Activated CD4-positive, alpha-beta memory T cell treated with anti-CD3 and anti-CD28 coated beads for 36 hours (primary cell): ENCODE measurements at regions of chr16 and their contacts with region 1.

Region 1: GRCh38 chr16:58000706-58001676 is at the start of gene USB1:
- DNase-seq: peak; percentile 87
- H3K4me3 Mint-ChIP-seq: peak within 1 kb of the TSS; percentile 91
- H3K27ac Mint-ChIP-seq: peak within 1 kb of the TSS; percentile 81
- H3K4me1 Mint-ChIP-seq: peaks cover 52% of the 10 kb centered on the region
- H3K27me3 Mint-ChIP-seq: no peaks in the 10 kb centered on the region
- total RNA-seq, gene USB1: 42.2 to 46.0 TPM

Region 2: DNA sequence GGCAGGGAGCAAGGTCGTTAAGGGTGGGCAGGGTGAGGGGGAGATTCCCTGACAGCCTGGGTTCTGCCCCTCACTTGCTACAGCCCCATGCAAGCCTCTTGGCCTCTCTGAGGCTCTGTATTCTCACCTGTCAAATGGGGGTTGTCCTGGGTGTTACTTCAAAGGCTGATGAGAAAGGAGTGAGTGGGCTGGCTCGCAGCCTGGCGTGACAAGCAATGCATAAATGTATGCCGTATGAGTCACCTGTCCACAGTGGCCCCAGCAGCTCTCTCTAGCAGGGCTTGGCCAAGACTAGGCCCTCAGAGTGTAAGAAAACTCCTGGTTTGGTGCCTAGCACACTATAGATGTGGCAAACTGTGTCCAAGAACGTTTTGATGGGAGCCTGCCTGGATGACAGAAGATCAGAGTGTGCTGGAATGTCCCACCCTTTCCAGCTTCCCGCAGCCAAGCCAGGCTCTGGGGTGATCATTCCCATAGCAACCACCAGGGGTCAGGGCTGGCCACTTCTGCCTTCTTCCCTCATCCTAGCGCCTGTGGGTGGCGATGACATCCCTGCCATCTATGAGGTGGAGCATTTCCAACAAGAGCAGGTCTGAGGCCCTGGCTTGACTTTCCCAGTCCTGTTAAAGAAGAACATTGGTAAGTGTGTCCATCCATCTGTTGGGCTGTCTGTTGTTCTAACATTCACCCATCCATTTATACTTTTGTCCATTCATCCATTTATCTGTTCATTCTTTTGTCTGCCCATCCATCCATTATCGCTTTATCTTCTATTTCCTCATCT is 409.7 kb before region 1 on chr16:
- CTCF ChIA-PET with region 1: no interaction called
- POLR2A ChIA-PET with region 1: no interaction called
- intact Hi-C with region 1: loop called (anchors 2 kb)
- DNase-seq: peak; percentile 87
- H3K4me3 Mint-ChIP-seq: peak overlapping the region; percentile 53
- H3K27ac Mint-ChIP-seq: peak overlapping the region; percentile 93
- H3K4me1 Mint-ChIP-seq: peaks cover 34% of the 10 kb centered on the region
- H3K27me3 Mint-ChIP-seq: no peaks in the 10 kb centered on the region

Region 3: GRCh38 chr16:57757326-57757786 is 243.6 kb before region 1 on chr16:
- CTCF ChIA-PET with region 1: interaction called, 4 read pairs
- POLR2A ChIA-PET with region 1: no interaction called
- intact Hi-C with region 1: loop called (anchors 1 kb)
- DNase-seq: peak; percentile 93
- H3K4me3 Mint-ChIP-seq: no peak overlapping the region
- H3K27ac Mint-ChIP-seq: no peak overlapping the region
- H3K4me1 Mint-ChIP-seq: peaks cover 6% of the 10 kb centered on the region
- H3K27me3 Mint-ChIP-seq: no peaks in the 10 kb centered on the region

Region 4: GRCh38 chr16:57810197-57811031 is 190.6 kb before region 1 on chr16:
- CTCF ChIA-PET with region 1: interaction called, 3 read pairs
- POLR2A ChIA-PET with region 1: no interaction called
- intact Hi-C with region 1: loop called (anchors 1 kb)
- DNase-seq: peak; percentile 89
- H3K4me3 Mint-ChIP-seq: peak overlapping the region; percentile 28
- H3K27ac Mint-ChIP-seq: peak overlapping the region; percentile 53
- H3K4me1 Mint-ChIP-seq: peaks cover 25% of the 10 kb centered on the region
- H3K27me3 Mint-ChIP-seq: peaks cover 8% of the 10 kb centered on the region

Region 5: GRCh38 chr16:57984331-57985203 is 16.4 kb before region 1 on chr16:
- CTCF ChIA-PET with region 1: interaction called, 3 read pairs
- POLR2A ChIA-PET with region 1: interaction called, 4 read pairs
- intact Hi-C with region 1: loop called (anchors 1 kb)
- DNase-seq: peak; percentile 96
- H3K4me3 Mint-ChIP-seq: peak overlapping the region; percentile 87
- H3K27ac Mint-ChIP-seq: no peak overlapping the region
- H3K4me1 Mint-ChIP-seq: peaks cover 8% of the 10 kb centered on the region
- H3K27me3 Mint-ChIP-seq: no peaks in the 10 kb centered on the region

Region 6: DNA sequence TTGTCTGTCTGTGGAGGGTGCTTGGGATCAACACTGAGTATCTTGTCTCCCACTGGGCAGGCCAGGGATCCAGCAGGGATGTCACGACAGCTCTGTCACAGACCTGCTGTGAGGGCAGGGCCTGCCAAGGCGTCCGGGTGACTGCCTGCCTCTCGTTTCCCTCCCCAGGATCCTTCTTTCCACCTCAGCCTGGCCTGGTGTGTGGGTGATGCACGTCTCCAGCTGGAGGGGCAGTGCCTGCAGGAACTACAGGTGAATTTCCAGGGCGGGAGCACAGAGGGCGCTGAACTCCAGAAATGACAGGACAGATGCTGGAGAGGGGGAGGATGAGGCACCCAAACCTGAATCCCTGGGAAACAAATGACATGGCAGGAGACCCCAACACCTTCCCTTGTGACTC is 17.8 kb after region 1 on chr16:
- CTCF ChIA-PET with region 1: no interaction called
- POLR2A ChIA-PET with region 1: no interaction called
- intact Hi-C with region 1: no loop called
- DNase-seq: no peak
- H3K4me3 Mint-ChIP-seq: no peak overlapping the region
- H3K27ac Mint-ChIP-seq: no peak overlapping the region
- H3K4me1 Mint-ChIP-seq: peaks cover 3% of the 10 kb centered on the region
- H3K27me3 Mint-ChIP-seq: no peaks in the 10 kb centered on the region

Region 7: DNA sequence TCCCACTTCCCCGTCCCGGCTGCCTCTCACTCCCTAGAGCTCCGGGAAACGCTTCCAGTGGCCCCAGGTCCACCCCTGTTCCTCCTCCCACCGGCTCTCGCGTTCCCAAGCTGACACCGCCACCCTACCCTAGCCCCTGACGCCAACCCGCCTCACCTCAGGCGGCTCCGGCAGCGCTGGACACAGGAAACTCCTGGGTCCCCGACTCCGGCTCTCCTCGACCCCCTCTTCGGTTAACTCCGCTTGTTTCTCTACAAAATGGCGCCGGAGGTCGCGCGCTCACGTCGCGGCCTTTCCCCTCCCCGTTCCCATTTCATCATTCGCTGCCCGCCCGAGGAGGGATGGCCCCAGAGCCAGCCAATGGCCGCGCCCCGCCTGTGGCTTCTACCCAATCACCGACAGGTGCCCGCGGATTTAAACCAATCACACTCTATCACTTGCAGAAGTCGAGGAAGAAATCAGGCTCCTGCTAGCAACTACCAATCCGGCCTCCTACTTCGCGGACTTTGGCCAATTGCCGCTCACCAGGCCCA is 628.6 kb after region 1 on chr16 and contains the start of gene CNOT1:
- CTCF ChIA-PET with region 1: no interaction called
- POLR2A ChIA-PET with region 1: no interaction called
- intact Hi-C with region 1: loop called (anchors 1 kb)
- DNase-seq: peak; percentile 99
- H3K4me3 Mint-ChIP-seq: peak within 1 kb of the TSS; percentile 89
- H3K27ac Mint-ChIP-seq: peak within 1 kb of the TSS; percentile 99
- H3K4me1 Mint-ChIP-seq: peaks cover 26% of the 10 kb centered on the region
- H3K27me3 Mint-ChIP-seq: peaks cover 1% of the 10 kb centered on the region
- total RNA-seq, gene CNOT1: 230 to 242 TPM